ENCODE measurements at regions of chr12 and their contacts with region 1.

Region 1: DNA sequence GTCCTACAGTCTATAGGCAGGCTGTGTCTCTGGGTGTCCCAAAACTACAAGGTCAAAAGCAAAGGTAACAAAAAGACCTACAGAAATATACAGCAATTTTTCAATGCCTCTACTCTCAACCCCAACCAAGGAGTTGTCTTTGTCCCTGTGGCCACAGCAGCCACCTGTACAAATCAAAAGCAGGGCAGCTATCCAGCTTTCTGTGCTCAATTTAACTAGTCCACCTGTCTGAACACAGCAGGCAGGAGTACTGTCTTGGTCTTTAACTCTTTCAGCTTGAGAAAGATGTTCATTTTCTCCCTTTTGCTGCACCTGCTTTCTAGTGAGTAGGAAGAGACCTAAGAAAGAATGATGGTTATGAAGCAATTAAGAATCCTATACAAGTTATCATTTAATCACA is 19.7 kb downstream of the GDF11 start:
- DNase-seq: no peak
- ATAC-seq: no peak

Region 2: GRCh38 chr12:55582066-55582465 is 180.6 kb before region 1 on chr12:
- intact Hi-C with region 1: no loop called
- DNase-seq: peak; percentile 40
- ATAC-seq: no peak

Region 3: GRCh38 chr12:55777856-55778255 is 15.2 kb after region 1 on chr12:
- intact Hi-C with region 1: loop called (anchors 1 kb)
- DNase-seq: no peak
- ATAC-seq: no peak

Region 4: DNA sequence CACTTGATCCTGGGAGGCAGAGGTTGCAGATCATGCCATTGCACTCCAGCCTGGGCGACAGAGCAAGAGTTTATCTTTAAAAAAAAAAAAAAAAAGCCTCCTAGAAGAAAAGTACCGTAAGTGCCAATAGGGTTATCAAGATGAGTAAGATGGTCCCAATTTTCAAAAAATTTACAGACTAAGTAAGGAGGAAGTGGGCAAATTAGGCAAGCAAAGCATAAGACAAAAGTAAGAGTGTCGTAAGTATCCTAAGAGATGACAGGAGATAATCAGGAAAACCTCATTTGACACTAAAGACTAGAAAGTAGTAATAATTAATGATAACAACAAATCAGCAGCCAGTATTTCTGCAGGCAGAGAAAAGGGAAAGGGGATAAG is 152.8 kb after region 1 on chr12:
- intact Hi-C with region 1: no loop called
- DNase-seq: no peak
- ATAC-seq: no peak